Esophagus muscularis mucosa (tissue), 4 donors: ENCODE measurements at regions of chr9 and their contacts with region 1.

Region 1: DNA sequence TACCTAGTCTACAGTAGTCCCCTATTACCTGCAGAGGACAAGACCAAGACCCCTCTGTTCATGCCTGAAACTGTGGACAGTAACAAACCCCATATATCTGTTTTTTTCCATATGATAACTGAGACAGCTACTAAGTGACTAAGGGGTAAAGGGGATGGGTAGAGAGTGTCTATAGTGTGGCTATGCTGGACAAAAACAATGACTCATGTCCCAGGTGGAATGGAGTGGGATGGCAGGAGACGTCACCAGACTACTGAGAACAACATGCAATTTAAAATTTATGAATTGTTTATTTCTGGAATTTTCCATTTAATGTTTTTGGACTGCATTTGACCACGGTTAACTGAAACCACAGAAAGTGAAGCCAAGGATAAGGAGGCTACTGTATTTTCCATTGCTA is 171.8 kb downstream of the AGTPBP1 start:
- DNase-seq: no peak
- H3K4me3 ChIP-seq: no peak overlapping the region
- H3K27ac ChIP-seq: no peak overlapping the region
- H3K4me1 ChIP-seq: no peaks in the 10 kb centered on the region
- H3K27me3 ChIP-seq: no peaks in the 10 kb centered on the region
- CTCF ChIP-seq: no peak
- EP300 ChIP-seq: no peak
- POLR2A ChIP-seq: no peak

Region 2: GRCh38 chr9:85524531-85524930 is 45.5 kb before region 1 on chr9:
- intact Hi-C with region 1: loop called (anchors 2 kb)
- DNase-seq: no peak
- H3K4me3 ChIP-seq: no peak overlapping the region
- H3K27ac ChIP-seq: no peak overlapping the region
- H3K4me1 ChIP-seq: peaks cover 7 to 14% (median 12%) of the 10 kb centered on the region in 4 donors
- H3K27me3 ChIP-seq: peaks cover 0 to 39% (median 0%) of the 10 kb centered on the region in 4 donors
- CTCF ChIP-seq: no peak
- EP300 ChIP-seq: no peak
- POLR2A ChIP-seq: no peak

Region 3: DNA sequence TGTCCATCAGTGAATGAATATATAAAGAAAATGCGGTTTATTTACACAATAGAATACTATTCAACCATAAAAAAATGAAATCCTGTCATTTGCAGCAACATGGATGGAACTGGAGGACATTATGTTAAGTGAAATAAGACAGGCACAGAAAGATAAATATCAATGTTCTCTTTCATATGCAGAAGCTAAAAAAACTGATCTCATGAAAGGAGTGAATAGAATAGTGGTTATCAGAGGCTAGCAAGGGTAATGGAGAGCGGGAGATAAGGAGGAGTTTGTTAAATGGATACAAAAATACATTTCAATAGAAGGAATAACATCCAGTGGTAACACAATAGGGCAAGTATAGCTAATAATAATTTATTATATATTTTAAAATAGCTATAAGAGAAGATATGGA is 106.8 kb after region 1 on chr9:
- intact Hi-C with region 1: no loop called
- DNase-seq: no peak
- H3K4me3 ChIP-seq: no peak overlapping the region
- H3K27ac ChIP-seq: no peak overlapping the region
- H3K4me1 ChIP-seq: no peaks in the 10 kb centered on the region
- H3K27me3 ChIP-seq: no peaks in the 10 kb centered on the region
- CTCF ChIP-seq: no peak
- EP300 ChIP-seq: no peak
- POLR2A ChIP-seq: no peak